A549 (cell line): ENCODE measurements at regions of chr17 and their contacts with region 1.

Region 1: DNA sequence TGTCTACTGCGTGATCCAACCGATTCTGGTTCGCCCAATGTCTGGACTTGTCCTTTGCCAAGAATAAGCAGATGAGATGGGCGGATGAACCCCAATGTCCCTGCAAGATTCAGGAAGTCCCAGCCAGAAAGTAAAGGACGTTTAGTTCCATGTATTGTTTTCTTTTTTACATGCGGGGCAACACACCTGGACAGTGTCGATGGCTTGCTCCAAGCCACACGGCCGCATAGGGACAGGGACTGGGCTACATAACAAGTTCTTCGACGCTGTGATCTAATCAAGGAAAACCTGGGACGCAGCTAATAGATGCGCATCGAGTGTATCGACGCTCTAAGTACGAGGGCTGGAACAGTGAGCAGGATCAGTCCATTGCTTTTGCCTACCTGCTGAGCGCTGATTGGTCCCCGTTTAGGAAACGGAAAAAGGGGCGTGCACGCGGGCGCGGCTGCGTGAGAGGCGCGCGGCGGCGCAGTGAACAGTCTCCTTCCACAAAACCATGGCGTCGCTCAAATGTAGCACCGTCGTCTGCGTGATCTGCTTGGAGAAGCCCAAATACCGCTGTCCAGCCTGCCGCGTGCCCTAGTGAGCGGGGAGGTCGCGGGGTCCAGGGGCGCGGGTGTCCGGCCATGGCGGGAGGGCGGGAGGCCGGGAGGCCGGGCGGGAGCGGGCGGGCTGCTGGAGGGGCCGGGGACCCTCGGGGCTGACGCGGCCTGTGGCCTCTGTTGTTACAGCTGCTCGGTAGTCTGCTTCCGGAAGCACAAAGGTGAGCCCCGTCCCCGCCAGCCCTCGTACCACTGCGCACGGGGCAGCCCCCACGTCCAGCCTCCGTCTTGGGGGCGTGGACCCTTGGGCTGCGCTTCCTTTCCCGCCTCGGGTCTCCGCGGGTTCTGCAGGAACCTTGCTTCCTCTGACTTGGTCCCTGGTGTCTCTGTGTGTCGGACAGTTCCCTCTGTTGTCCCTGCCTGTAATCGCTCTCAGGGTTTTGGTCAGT is at the start of gene ZNHIT3:
- DNase-seq: peak; percentile 95 to 97
- ATAC-seq: peak; percentile 88 to 93
- H3K4me3 ChIP-seq: peak within 1 kb of the TSS; percentile 86
- H3K27ac ChIP-seq: peak within 1 kb of the TSS; percentile 83 to 95
- H3K4me1 ChIP-seq: peaks cover 14% of the 10 kb centered on the region
- CTCF ChIP-seq: no peak
- EP300 ChIP-seq: no peak
- POLR2A ChIP-seq: peak; percentile 89
- RAD21 ChIP-seq: no peak
- polyA plus RNA-seq, gene ZNHIT3: 147 and 166 TPM in 2 replicates

Region 2: DNA sequence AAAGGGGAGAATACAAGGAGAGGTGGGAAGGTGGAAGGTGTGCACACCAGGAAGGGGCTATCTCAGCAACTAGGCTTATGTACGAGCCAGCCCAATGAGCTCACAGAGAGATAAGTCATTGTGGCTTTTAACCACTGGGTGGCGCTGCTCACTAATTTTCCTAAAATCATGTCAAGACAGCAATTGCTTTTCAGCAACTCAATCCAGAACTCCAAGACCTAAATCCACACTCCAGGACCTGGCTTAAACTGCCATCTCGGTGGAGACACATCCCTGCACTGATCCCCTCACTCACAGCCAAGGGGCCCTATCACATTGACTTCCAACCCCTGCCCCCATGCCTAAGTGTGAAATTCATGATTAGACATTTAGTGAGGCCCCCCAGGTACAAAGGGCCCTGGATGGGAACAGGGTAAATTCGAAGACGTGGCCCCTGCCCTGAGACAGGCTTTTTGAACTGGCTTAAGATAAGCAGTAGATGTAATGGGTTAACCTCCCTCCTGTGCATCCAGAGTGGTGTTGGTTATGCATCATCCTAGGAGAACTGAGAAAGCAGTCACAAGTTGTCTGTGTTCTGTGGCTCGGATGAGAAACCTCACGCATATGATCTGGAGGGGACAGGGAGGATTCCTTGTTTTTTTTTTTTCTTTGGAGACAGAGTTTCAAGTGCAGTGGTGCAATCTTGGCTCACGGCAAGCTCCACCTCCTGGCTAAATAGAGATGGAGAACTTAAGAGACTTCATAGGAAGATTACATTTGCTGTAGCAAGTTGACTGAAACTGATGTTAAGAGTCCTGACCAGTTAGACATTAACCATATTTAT is 516.7 kb before region 1 on chr17:
- CTCF ChIA-PET with region 1: interaction called, 37 read pairs
- POLR2A ChIA-PET with region 1: interaction called, 6 read pairs
- DNase-seq: peak; percentile 69 to 84
- ATAC-seq: peak; percentile 83 to 93
- H3K4me3 ChIP-seq: no peak overlapping the region
- H3K27ac ChIP-seq: no peak overlapping the region
- H3K4me1 ChIP-seq: peaks cover 9% of the 10 kb centered on the region; the same call in 1 of the 3 replicates
- CTCF ChIP-seq: peak; percentile 93
- EP300 ChIP-seq: no peak
- POLR2A ChIP-seq: no peak
- RAD21 ChIP-seq: peak; percentile 96

Region 3: GRCh38 chr17:36203335-36203734 is 283.2 kb before region 1 on chr17:
- CTCF ChIA-PET with region 1: no interaction called
- POLR2A ChIA-PET with region 1: no interaction called
- DNase-seq: no peak
- ATAC-seq: no peak
- H3K4me3 ChIP-seq: no peak overlapping the region
- H3K27ac ChIP-seq: no peak overlapping the region
- H3K4me1 ChIP-seq: no peaks in the 10 kb centered on the region
- CTCF ChIP-seq: no peak
- EP300 ChIP-seq: no peak
- POLR2A ChIP-seq: no peak
- RAD21 ChIP-seq: no peak

Region 4: GRCh38 chr17:36457283-36457682 is 29.2 kb before region 1 on chr17:
- CTCF ChIA-PET with region 1: interaction called, 54 read pairs
- POLR2A ChIA-PET with region 1: no interaction called
- DNase-seq: no peak
- ATAC-seq: no peak
- H3K4me3 ChIP-seq: no peak overlapping the region
- H3K27ac ChIP-seq: no peak overlapping the region
- H3K4me1 ChIP-seq: no peaks in the 10 kb centered on the region
- CTCF ChIP-seq: no peak
- EP300 ChIP-seq: no peak
- POLR2A ChIP-seq: no peak
- RAD21 ChIP-seq: no peak

Region 5: DNA sequence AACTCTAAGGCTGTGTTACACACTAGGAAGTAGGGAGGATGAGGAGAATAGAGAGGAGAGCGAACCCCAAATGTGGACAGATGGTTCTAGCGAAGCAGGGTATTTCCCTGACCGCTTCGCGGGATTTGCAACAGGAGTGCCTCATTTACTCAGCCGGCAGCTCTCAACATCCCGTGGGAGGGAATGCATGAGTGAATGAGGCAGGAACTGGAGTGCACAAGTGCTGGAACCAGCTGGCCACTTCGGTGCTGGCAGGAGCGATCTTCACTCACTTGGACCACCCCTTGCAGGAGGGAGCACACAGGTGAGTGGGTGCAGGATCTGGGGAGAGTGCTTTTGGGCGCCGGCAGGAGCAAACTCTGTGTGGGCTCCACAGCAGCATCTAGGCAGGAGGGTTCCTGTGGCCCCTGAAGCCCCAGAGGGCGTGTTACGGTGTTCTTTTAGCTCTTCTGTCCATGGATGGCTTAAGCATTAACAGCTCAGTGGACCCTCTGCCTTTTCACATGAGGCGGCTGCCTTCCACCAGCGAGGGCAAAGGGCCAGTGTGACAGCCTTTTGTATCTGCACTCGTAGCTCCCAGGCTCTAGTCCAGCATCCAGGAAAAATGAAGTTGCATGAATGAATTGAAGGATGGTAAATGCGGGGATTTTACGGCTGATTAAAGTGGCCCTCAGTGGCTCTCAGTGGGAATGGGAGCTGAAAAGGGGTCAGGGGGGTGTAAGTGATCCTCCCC is 17.4 kb before region 1 on chr17:
- CTCF ChIA-PET with region 1: interaction called, 54 read pairs
- POLR2A ChIA-PET with region 1: no interaction called
- DNase-seq: no peak
- ATAC-seq: peak in 1 of 2 experiments; percentile 23; a peak in 2 of 6 replicates
- H3K4me3 ChIP-seq: no peak overlapping the region
- H3K27ac ChIP-seq: no peak overlapping the region
- H3K4me1 ChIP-seq: no peaks in the 10 kb centered on the region
- CTCF ChIP-seq: no peak
- EP300 ChIP-seq: no peak
- POLR2A ChIP-seq: no peak
- RAD21 ChIP-seq: no peak

Region 6: DNA sequence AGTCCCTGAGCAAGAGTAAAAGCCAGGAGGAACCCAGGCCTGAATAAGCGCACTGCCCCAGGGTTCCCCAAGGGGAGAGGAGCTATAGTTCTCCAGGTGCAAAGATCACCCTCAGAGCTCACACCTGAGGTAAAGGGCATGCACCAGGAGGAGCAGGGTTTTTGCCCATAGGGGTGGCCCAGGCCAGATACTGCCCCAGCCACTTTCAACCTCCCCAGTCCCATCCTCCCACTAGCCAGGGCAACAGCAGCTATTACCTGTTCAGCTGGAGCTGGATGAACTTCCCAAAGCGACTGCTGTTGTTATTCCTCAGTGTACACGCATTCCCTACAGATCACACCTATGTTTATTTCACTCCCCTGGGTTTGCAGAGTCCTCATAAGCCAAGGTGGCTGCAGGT is 28.4 kb after region 1 on chr17:
- CTCF ChIA-PET with region 1: interaction called, 15 read pairs
- POLR2A ChIA-PET with region 1: no interaction called
- DNase-seq: no peak
- ATAC-seq: no peak; a peak in 1 of 6 replicates
- H3K4me3 ChIP-seq: no peak overlapping the region
- H3K27ac ChIP-seq: no peak overlapping the region
- H3K4me1 ChIP-seq: no peaks in the 10 kb centered on the region
- CTCF ChIP-seq: no peak
- EP300 ChIP-seq: no peak
- POLR2A ChIP-seq: no peak
- RAD21 ChIP-seq: no peak

Region 7: GRCh38 chr17:36657763-36658490 is 171.4 kb after region 1 on chr17:
- CTCF ChIA-PET with region 1: no interaction called
- POLR2A ChIA-PET with region 1: no interaction called
- DNase-seq: peak in 1 of 2 experiments; percentile 23
- ATAC-seq: peak in 1 of 2 experiments; percentile 34; a peak in 3 of 6 replicates
- H3K4me3 ChIP-seq: no peak overlapping the region
- H3K27ac ChIP-seq: no peak overlapping the region
- H3K4me1 ChIP-seq: 0 out of 3 replicates have a peak, but pooled peaks cover 1% of the 10 kb centered on the region
- CTCF ChIP-seq: no peak
- EP300 ChIP-seq: no peak
- POLR2A ChIP-seq: no peak
- RAD21 ChIP-seq: peak; percentile 18 to 43; a peak in 3 of 5 replicates